CD8-positive, alpha-beta T cell (primary cell): ENCODE measurements at regions of chr7 and their contacts with region 1.

Region 1: DNA sequence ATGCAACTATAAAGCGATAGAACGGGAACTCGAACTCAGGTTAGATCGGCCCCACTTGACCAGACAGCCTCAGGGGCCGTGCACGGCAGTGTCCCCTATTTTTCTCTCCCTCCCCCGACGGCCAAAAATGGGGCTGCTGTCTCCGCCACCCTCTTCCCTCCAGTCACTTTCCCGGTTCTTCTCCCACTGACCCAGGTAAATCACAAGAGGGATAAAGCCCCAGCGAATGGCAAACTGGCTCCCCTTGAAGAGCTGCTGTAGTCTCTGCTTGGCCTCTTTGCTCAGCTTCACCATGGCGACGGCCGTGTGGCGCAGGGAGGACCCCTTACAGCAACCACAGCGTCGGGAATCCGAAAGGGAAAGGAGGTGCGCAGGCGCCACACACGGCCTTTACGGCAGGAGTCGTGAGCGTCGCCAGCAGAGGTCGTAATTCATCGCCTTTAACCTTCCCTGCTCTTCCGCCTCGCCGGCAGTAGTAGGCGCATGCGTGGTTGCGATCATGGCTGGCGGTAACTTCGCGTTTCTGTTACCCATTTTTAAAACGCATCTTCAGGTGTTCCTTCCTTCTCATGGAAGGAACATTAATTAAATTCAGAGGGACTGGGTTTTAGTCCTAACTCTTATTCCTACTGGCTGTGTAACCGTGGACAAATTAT is at the start of gene TOMM7:
- DNase-seq: peak; percentile 72 to 99 (median 86)
- ATAC-seq: peak; percentile 96
- H3K4me3 ChIP-seq: peak within 1 kb of the TSS; percentile 74 to 89
- H3K4me3 Mint-ChIP-seq: peak within 1 kb of the TSS; percentile 99
- H3K27ac ChIP-seq: peak within 1 kb of the TSS; percentile 85
- H3K27ac Mint-ChIP-seq: peak within 1 kb of the TSS; percentile 99
- H3K4me1 ChIP-seq: peaks cover 20% of the 10 kb centered on the region
- H3K4me1 Mint-ChIP-seq: peaks cover 41% of the 10 kb centered on the region
- H3K27me3 ChIP-seq: no peaks in the 10 kb centered on the region
- H3K27me3 Mint-ChIP-seq: peaks cover 4% of the 10 kb centered on the region
- CTCF ChIP-seq: no peak
- total RNA-seq, gene TOMM7: 595 to 610 TPM

Region 2: DNA sequence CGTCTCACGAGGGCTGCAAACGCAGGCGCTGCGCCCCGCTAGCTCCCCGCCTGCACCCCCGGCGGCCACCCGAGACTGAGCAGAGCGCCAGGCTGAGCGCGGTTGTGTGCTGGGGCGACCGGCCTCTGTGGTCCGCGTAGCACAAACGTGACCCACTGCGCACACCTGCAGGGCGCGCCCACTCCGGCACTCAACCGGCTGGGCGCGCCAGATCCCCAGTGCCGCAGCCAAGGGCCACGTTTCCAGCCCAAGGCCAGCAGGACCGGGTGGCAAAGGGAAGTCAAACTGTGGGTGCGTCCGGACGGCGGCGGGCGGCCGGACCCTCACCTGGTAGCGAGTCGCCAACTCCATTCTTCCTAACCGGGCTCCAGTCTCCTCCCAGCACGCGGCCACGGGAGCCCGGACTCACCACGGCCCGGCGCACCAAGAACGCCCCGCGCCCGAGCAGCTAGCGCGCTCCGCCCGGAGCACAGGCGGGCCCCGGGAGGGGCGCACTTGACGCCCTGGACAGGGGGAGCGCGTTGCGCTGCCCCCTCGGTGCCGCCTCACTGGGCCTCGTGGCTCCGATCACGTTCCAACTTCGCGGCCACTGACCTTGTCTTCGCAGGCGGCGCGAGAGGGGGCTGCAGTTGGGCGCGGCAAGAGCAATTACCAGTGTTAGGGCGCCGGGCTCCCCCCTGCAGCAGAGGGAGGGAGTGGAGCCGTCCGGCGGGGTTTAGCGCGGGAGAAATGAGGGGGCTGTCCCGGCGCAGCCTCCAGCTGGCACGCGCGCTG is 877.0 kb before region 1 on chr7 and contains the start of gene CDCA7L:
- CTCF ChIA-PET with region 1: no interaction called
- POLR2A ChIA-PET with region 1: no interaction called
- intact Hi-C with region 1: loop called in 1 of 2 experiments (anchors 10 kb)
- DNase-seq: peak; percentile 6 to 73 (median 47)
- ATAC-seq: peak; percentile 80
- H3K4me3 ChIP-seq: peak within 1 kb of the TSS; percentile 62 to 72
- H3K4me3 Mint-ChIP-seq: peak within 1 kb of the TSS; percentile 88
- H3K27ac ChIP-seq: peak within 1 kb of the TSS in 1 of 2 experiments; percentile 38
- H3K27ac Mint-ChIP-seq: peak within 1 kb of the TSS; percentile 63
- H3K4me1 ChIP-seq: peaks cover 15% of the 10 kb centered on the region
- H3K4me1 Mint-ChIP-seq: peaks cover 55% of the 10 kb centered on the region
- H3K27me3 ChIP-seq: peaks cover 0 to 2% of the 10 kb centered on the region in 2 experiments
- H3K27me3 Mint-ChIP-seq: peaks cover 3% of the 10 kb centered on the region
- CTCF ChIP-seq: no peak
- total RNA-seq, gene CDCA7L: 18.4 to 24.7 TPM

Region 3: GRCh38 chr7:22854158-22855048 is 31.8 kb after region 1 on chr7:
- CTCF ChIA-PET with region 1: interaction called, 4 read pairs
- POLR2A ChIA-PET with region 1: interaction called, 5 read pairs
- intact Hi-C with region 1: loop called (anchors 1 kb)
- DNase-seq: peak in 8 of 9 experiments; percentile 58 to 89 (median 76)
- ATAC-seq: peak; percentile 79
- H3K4me3 ChIP-seq: peak overlapping the region; percentile 82 to 94
- H3K4me3 Mint-ChIP-seq: peak overlapping the region; percentile 93
- H3K27ac ChIP-seq: peak overlapping the region; percentile 64 to 81
- H3K27ac Mint-ChIP-seq: peak overlapping the region; percentile 93
- H3K4me1 ChIP-seq: peaks cover 11% of the 10 kb centered on the region
- H3K4me1 Mint-ChIP-seq: peaks cover 23% of the 10 kb centered on the region
- H3K27me3 ChIP-seq: no peaks in the 10 kb centered on the region
- H3K27me3 Mint-ChIP-seq: no peaks in the 10 kb centered on the region
- CTCF ChIP-seq: peak; percentile 65